IMR-90 (cell line): ENCODE measurements at regions of chr13 and their contacts with region 1.

Region 1: DNA sequence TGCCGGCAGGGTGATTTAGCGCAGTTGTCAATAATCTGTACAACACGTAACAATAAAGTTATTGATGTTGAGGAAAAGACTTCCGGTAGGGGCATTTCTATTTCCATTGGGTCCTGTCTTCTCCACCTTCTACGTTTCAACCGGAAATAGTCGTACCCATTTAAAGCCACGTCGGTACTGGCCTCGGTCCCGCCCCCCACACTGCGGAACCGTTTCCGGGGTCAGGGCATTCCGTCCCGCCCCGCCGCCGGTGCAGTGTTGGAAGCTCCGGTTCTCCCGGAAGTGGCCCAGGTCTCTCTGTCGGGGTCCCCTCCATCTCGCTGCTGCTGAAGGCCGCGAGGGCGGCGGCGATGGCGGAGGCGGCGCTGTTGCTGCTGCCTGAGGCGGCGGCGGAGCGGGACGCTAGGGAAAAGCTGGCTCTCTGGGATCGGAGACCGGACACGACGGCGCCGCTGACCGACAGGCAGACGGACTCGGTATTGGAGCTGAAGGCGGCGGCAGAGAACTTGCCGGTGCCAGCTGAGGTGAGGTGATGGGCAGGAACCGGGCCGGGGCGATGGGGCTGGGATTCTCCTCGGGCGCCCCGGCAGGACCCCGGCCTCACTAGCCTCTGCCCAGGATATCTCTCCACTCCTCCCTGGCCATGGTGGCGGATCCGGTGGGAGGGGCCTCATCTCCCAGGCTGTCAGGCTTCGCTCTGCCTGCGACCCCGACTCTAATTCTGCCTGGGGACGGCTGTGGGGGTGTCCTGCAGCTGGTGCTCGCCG is at the start of gene COG3:
- DNase-seq: peak; percentile 97
- ATAC-seq: peak; percentile 94
- H3K4me3 ChIP-seq: peak within 1 kb of the TSS; percentile 83
- H3K27ac ChIP-seq: peak within 1 kb of the TSS; percentile 91
- H3K4me1 ChIP-seq: peaks cover 2% of the 10 kb centered on the region; the same call in 1 of the 2 replicates
- H3K27me3 ChIP-seq: no peaks in the 10 kb centered on the region
- CTCF ChIP-seq: peak; percentile 37; the same call in 1 of the 2 replicates
- POLR2A ChIP-seq: peak; percentile 90
- RAD21 ChIP-seq: no peak
- total RNA-seq, gene COG3: 31.9 and 34.2 TPM in 2 replicates

Region 2: GRCh38 chr13:44837250-44837649 is 627.6 kb before region 1 on chr13:
- CTCF ChIA-PET with region 1: no interaction called
- POLR2A ChIA-PET with region 1: no interaction called
- dilution Hi-C with region 1: no loop called
- in situ Hi-C with region 1: no loop called
- intact Hi-C with region 1: no loop called
- DNase-seq: peak; percentile 78
- ATAC-seq: peak; percentile 85
- H3K4me3 ChIP-seq: no peak overlapping the region
- H3K27ac ChIP-seq: no peak overlapping the region
- H3K4me1 ChIP-seq: peaks cover 8% of the 10 kb centered on the region
- H3K27me3 ChIP-seq: no peaks in the 10 kb centered on the region
- CTCF ChIP-seq: no peak
- POLR2A ChIP-seq: no peak
- RAD21 ChIP-seq: peak; percentile 17; the same call in 1 of the 2 replicates

Region 3: GRCh38 chr13:45393941-45394570 is 70.8 kb before region 1 on chr13:
- CTCF ChIA-PET with region 1: no interaction called
- POLR2A ChIA-PET with region 1: no interaction called
- dilution Hi-C with region 1: no loop called
- in situ Hi-C with region 1: no loop called
- intact Hi-C with region 1: loop called (anchors 2 kb)
- DNase-seq: peak; percentile 54
- ATAC-seq: peak; percentile 60; the same call in 1 of the 2 replicates
- H3K4me3 ChIP-seq: no peak overlapping the region
- H3K27ac ChIP-seq: no peak overlapping the region
- H3K4me1 ChIP-seq: peaks cover 8% of the 10 kb centered on the region
- H3K27me3 ChIP-seq: no peaks in the 10 kb centered on the region
- CTCF ChIP-seq: peak; percentile 59
- POLR2A ChIP-seq: no peak
- RAD21 ChIP-seq: peak; percentile 56

Region 4: GRCh38 chr13:45737571-45738017 is 272.7 kb after region 1 on chr13:
- CTCF ChIA-PET with region 1: no interaction called
- POLR2A ChIA-PET with region 1: no interaction called
- dilution Hi-C with region 1: no loop called
- in situ Hi-C with region 1: no loop called
- intact Hi-C with region 1: no loop called
- DNase-seq: no peak
- ATAC-seq: no peak
- H3K4me3 ChIP-seq: no peak overlapping the region
- H3K27ac ChIP-seq: no peak overlapping the region
- H3K4me1 ChIP-seq: no peaks in the 10 kb centered on the region
- H3K27me3 ChIP-seq: peaks cover 5% of the 10 kb centered on the region
- CTCF ChIP-seq: no peak
- POLR2A ChIP-seq: no peak
- RAD21 ChIP-seq: no peak